ENCODE measurements at regions of chr10 and their contacts with region 1.

Region 1: DNA sequence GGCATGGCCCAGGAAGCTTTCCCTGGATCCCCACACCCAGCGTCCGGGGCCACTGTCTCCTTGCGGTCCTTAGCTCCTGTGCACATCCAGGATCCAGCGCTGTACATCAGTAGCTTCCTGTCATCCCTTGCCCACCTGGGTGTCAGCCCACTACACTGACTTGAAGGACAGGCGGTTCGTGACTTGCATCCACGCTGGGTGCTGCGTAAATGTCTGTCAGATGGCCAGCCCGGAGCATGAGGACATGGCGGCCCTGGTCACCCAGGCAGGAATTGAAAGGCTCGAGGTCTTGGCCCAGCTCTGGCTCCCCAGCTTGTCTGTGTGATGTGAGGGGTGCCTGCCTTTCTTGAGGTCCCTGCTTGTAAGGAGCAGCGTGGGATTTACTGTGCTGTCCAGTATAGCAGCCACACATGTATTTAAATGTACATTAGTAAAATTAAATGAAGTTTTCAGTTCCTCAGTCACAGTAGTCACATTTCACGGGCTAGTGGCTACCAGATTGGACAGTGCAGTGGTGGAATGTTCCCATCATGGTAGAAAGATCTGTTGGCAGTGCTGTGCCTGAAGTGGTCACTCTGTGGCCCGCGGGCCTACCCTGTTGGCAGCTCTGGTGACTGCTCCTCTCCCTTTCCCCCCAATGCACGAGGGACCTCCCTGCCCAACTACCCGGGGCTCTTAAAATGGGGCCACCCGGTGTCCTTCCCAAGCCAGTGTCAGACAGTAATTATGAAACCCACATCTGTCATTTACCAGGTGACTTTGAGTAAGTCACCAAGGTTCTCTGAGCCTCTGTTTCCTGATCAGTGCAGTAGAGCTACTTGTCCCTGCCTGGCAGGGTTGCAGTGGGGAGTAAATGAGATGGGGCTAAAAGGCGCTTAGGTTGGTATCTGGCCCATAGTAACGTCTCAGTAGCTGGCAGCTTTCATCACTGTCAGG is 97.8 kb upstream of the PPIF start:
- DNase-seq: peak; percentile 59
- H3K4me3 Mint-ChIP-seq: no peak overlapping the region
- H3K27ac Mint-ChIP-seq: peak overlapping the region; percentile 69
- H3K4me1 Mint-ChIP-seq: peaks cover 62% of the 10 kb centered on the region
- H3K27me3 Mint-ChIP-seq: no peaks in the 10 kb centered on the region

Region 2: GRCh38 chr10:79266543-79267312 is 17.3 kb after region 1 on chr10:
- CTCF ChIA-PET with region 1: no interaction called
- POLR2A ChIA-PET with region 1: interaction called, 4 read pairs
- intact Hi-C with region 1: loop called (anchors 2 kb)
- DNase-seq: peak; percentile 67
- H3K4me3 Mint-ChIP-seq: no peak overlapping the region
- H3K27ac Mint-ChIP-seq: peak overlapping the region; percentile 4
- H3K4me1 Mint-ChIP-seq: peaks cover 23% of the 10 kb centered on the region
- H3K27me3 Mint-ChIP-seq: no peaks in the 10 kb centered on the region

Region 3: GRCh38 chr10:79322616-79323543 is 73.4 kb after region 1 on chr10:
- CTCF ChIA-PET with region 1: no interaction called
- POLR2A ChIA-PET with region 1: no interaction called
- intact Hi-C with region 1: no loop called
- DNase-seq: peak; percentile 91
- H3K4me3 Mint-ChIP-seq: peak overlapping the region; percentile 39
- H3K27ac Mint-ChIP-seq: peak overlapping the region; percentile 92
- H3K4me1 Mint-ChIP-seq: peaks cover 69% of the 10 kb centered on the region
- H3K27me3 Mint-ChIP-seq: no peaks in the 10 kb centered on the region

Measured in activated CD4-positive, alpha-beta memory T cell treated with anti-CD3 and anti-CD28 coated beads for 36 hours (primary cell).